ENCODE measurements at regions of chr9 and their contacts with region 1.

Region 1: DNA sequence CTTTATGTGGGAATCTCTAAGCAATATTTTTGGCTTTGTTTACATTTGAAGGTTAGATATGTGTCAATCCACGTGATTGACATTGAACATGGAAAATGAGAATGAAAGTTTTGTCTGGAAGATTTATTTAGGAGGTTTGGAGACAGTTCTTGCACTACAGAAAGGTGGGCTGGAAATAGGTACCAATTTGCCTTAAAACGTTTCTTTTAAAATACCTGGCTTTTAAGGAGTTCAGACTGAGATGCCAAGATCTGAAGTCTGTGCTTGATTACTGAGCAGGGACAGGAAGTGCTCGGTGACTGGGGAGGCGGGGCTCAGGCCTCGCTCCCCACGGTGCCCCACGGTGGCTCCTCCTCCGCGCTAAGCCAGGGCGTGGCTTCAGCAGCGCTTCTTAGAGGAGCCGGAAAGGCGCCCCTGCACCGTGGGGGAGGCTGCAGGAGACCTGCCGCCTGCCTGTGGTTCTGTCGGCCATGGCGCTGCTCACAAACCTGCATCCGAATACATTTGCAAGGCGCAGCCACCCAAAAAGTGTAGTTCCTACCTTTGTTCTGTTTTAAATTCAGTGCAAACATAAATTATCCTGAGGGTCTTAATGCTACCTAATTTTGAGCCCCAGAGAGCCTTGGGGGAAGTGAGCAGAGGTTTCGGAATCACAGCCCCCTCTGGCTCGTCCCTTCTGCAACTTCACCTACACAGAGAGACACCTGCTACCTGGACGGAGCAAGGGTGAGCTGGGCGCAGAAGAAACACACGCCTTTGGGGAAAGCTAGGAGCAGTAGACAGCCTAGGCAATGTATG is 49.2 kb downstream of the USP20 start:
- DNase-seq: peak; percentile 98
- H3K4me3 Mint-ChIP-seq: peak overlapping the region; percentile 83
- H3K27ac Mint-ChIP-seq: peak overlapping the region; percentile 98
- H3K4me1 Mint-ChIP-seq: peaks cover 53% of the 10 kb centered on the region
- H3K27me3 Mint-ChIP-seq: no peaks in the 10 kb centered on the region

Region 2: GRCh38 chr9:129656795-129657390 is 227.5 kb before region 1 on chr9:
- CTCF ChIA-PET with region 1: no interaction called
- POLR2A ChIA-PET with region 1: no interaction called
- DNase-seq: no peak
- H3K4me3 Mint-ChIP-seq: no peak overlapping the region
- H3K27ac Mint-ChIP-seq: no peak overlapping the region
- H3K4me1 Mint-ChIP-seq: no peaks in the 10 kb centered on the region
- H3K27me3 Mint-ChIP-seq: no peaks in the 10 kb centered on the region

Region 3: DNA sequence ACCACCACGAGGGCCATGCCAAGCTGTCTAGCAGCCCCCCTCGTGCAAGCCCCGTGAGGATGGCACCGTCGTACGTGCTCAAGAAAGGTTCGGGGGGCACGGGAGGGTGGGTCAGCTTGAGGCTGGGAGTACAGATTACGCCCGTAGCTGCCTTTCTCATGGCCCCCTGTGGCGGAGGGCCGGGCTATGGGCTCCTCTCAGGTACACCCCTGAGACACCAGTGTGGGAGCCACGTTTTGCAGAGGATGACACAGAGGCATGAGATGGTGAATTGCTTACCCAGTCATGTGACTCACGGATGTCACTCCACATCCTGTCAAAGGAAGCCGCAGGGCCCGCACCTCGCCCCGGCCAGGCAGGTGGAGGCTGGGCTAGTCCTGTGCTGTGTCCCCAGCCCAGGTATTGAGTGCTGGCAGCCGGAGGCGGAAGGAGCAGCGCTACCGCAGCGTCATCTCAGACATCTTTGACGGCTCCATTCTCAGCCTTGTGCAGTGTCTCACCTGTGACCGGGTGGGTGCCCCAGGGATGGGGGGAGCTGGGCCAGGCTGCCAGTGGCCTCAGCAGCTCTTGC is 15.4 kb before region 1 on chr9:
- CTCF ChIA-PET with region 1: interaction called, 22 read pairs
- POLR2A ChIA-PET with region 1: interaction called, 3 read pairs
- DNase-seq: peak; percentile 94
- H3K4me3 Mint-ChIP-seq: peak overlapping the region; percentile 59
- H3K27ac Mint-ChIP-seq: peak overlapping the region; percentile 95
- H3K4me1 Mint-ChIP-seq: peaks cover 84% of the 10 kb centered on the region
- H3K27me3 Mint-ChIP-seq: no peaks in the 10 kb centered on the region

Region 4: DNA sequence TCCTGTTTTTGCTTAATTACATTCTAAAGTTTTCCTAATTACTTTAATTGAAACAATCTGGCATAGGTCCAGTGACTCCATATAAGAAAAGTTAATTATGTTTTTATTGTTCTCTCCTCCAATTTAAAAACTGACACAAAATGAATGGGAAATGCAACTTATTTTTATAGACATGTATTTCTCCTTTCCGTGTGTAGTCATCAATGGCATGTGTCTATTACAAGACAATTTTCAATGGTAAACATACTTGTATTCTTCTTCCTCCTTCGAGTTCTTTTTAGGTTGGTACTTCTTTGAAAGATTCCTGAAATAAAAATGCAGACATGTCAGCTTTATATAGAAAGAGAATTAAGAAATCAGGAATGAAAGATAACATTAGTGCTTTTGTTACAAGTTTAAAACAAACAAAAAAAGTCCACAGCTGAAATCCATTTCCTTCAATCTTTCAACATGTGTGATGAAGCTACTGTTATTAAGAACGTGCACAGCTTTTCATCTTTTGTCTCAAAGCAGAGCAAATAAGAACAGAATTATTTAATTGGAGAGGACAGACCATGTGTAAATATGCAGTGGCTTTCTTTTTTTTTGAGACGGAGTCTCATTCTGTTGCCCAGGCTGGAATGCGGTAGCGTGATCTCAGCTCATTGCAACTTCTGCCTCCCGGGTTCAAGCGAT is 94.8 kb after region 1 on chr9:
- CTCF ChIA-PET with region 1: no interaction called
- POLR2A ChIA-PET with region 1: no interaction called
- DNase-seq: no peak
- H3K4me3 Mint-ChIP-seq: no peak overlapping the region
- H3K27ac Mint-ChIP-seq: peak overlapping the region; percentile 31
- H3K4me1 Mint-ChIP-seq: peaks cover 28% of the 10 kb centered on the region
- H3K27me3 Mint-ChIP-seq: no peaks in the 10 kb centered on the region

Region 5: GRCh38 chr9:130043654-130044623 is 159.5 kb after region 1 on chr9:
- CTCF ChIA-PET with region 1: interaction called, 6 read pairs
- POLR2A ChIA-PET with region 1: interaction called, 12 read pairs
- DNase-seq: no peak
- H3K4me3 Mint-ChIP-seq: peak overlapping the region; percentile 83
- H3K27ac Mint-ChIP-seq: peak overlapping the region; percentile 98
- H3K4me1 Mint-ChIP-seq: peaks cover 41% of the 10 kb centered on the region
- H3K27me3 Mint-ChIP-seq: no peaks in the 10 kb centered on the region

Measured in activated CD4-positive, alpha-beta T cell treated with anti-CD3 and anti-CD28 coated beads, Interleukin-2, amount 10 ng/mL, durations not matched to agents 7 days and 5 days (primary cell).